ENCODE measurements at regions of chr5 and their contacts with region 1.

Region 1: GRCh38 chr5:78157001-78157400 is 137.5 kb downstream of the AP3B1 start:
- DNase-seq: no peak
- ATAC-seq: no peak
- H3K4me3 ChIP-seq: no peak overlapping the region
- H3K27ac ChIP-seq: no peak overlapping the region
- H3K4me1 ChIP-seq: no peaks in the 10 kb centered on the region
- H3K27me3 ChIP-seq: no peaks in the 10 kb centered on the region
- CTCF ChIP-seq: no peak

Region 2: GRCh38 chr5:78280261-78280660 is 123.3 kb after region 1 on chr5:
- CTCF ChIA-PET with region 1: no interaction called
- POLR2A ChIA-PET with region 1: interaction called, 24 read pairs
- intact Hi-C with region 1: no loop called
- DNase-seq: no peak
- ATAC-seq: no peak
- H3K4me3 ChIP-seq: no peak overlapping the region
- H3K27ac ChIP-seq: no peak overlapping the region
- H3K4me1 ChIP-seq: no peaks in the 10 kb centered on the region
- H3K27me3 ChIP-seq: no peaks in the 10 kb centered on the region
- CTCF ChIP-seq: no peak